Dendritic cell treated with granulocyte-macrophage colony-stimulating factor and Interleukin-4, amounts not matched to agents 40 ng/mL and 50 ng/mL, for 4 days (primary cell): ENCODE measurements at regions of chr5 and their contacts with region 1.

Region 1: DNA sequence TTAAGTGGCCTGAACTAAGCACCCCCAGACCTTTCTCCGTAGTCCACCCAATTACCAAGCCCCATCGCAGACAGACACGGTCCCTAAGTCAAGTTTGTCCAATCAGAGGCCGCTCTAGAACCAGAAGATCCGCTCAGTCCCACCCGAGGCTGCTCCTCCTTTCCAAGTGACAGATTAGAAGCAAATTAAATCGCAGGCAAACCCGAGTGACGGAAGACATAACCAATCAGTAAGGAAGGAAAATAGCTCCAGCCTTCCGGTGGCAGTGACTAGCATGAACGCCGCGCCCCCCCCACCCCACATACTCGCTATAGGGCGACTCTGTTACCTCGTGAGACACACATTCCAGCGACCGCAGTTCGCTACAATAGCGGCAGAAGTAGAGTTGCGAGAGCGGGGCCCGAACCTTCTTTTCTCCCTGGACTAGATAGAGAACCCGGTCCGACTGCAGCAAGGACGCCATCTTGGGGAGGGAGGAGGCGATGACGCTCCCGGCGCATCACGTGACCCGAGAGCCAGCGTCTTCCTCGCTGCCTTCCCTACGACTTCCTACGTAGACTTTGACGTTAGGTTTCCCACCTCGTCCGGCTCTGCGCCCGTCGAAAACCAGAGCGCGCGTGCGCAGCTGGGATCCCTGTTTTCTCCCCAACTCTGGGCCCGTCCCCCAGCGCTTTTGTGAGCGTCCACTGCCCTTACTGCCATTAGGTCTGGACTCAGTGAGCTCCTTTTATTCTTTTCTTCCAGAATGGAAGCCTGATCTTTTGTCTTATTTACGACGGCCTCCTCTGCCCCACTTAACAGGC is at the start of gene DCTN4:
- H3K4me3 Mint-ChIP-seq: no peak within 1 kb of the TSS
- H3K27ac Mint-ChIP-seq: no peak within 1 kb of the TSS
- H3K4me1 Mint-ChIP-seq: peaks cover 29% of the 10 kb centered on the region
- H3K27me3 Mint-ChIP-seq: no peaks in the 10 kb centered on the region

Region 2: GRCh38 chr5:150778517-150779396 is 20.0 kb after region 1 on chr5 and contains the start of gene SMIM3:
- intact Hi-C with region 1: loop called (anchors 2 kb)
- H3K4me3 Mint-ChIP-seq: peak within 1 kb of the TSS; percentile 100
- H3K27ac Mint-ChIP-seq: peak within 1 kb of the TSS; percentile 91
- H3K4me1 Mint-ChIP-seq: peaks cover 58% of the 10 kb centered on the region
- H3K27me3 Mint-ChIP-seq: no peaks in the 10 kb centered on the region

Region 3: GRCh38 chr5:151357801-151358200 is 599.1 kb after region 1 on chr5:
- intact Hi-C with region 1: no loop called
- H3K4me3 Mint-ChIP-seq: no peak overlapping the region
- H3K27ac Mint-ChIP-seq: no peak overlapping the region
- H3K4me1 Mint-ChIP-seq: no peaks in the 10 kb centered on the region
- H3K27me3 Mint-ChIP-seq: peaks cover 2% of the 10 kb centered on the region